Common myeloid progenitor, CD34-positive (primary cell): ENCODE measurements at regions of chr6 and their contacts with region 1.

Region 1: GRCh38 chr6:33744001-33744848 is 2.5 kb downstream of the IP6K3 start:
- DNase-seq: peak; percentile 72 to 88 (median 84)
- H3K4me3 ChIP-seq: no peak overlapping the region
- H3K27ac ChIP-seq: no peak overlapping the region
- H3K4me1 ChIP-seq: peaks cover 0 to 5% (median 0%) of the 10 kb centered on the region in 4 experiments
- H3K27me3 ChIP-seq: peaks cover 0 to 22% (median 0%) of the 10 kb centered on the region in 5 experiments

Region 2: GRCh38 chr6:33711140-33712129 is 32.8 kb before region 1 on chr6 and contains the start of gene UQCC2:
- CTCF ChIA-PET with region 1: interaction called, 18 read pairs
- POLR2A ChIA-PET with region 1: no interaction called
- DNase-seq: peak; percentile 96 to 98 (median 96)
- H3K4me3 ChIP-seq: peak within 1 kb of the TSS; percentile 60 to 97 (median 83)
- H3K27ac ChIP-seq: peak within 1 kb of the TSS; percentile 89 to 93
- H3K4me1 ChIP-seq: peaks cover 9 to 44% (median 30%) of the 10 kb centered on the region in 4 experiments
- H3K27me3 ChIP-seq: no peaks in the 10 kb centered on the region

Region 3: GRCh38 chr6:33727932-33728331 is 16.3 kb before region 1 on chr6:
- CTCF ChIA-PET with region 1: interaction called, 12 read pairs
- POLR2A ChIA-PET with region 1: no interaction called
- DNase-seq: no peak
- H3K4me3 ChIP-seq: no peak overlapping the region
- H3K27ac ChIP-seq: no peak overlapping the region
- H3K4me1 ChIP-seq: no peaks in the 10 kb centered on the region
- H3K27me3 ChIP-seq: peaks cover 0 to 10% (median 4%) of the 10 kb centered on the region in 5 experiments

Region 4: GRCh38 chr6:33761922-33762629 is 17.9 kb after region 1 on chr6:
- CTCF ChIA-PET with region 1: interaction called, 44 read pairs
- POLR2A ChIA-PET with region 1: interaction called, 3 read pairs
- DNase-seq: peak; percentile 60 to 73 (median 64)
- H3K4me3 ChIP-seq: no peak overlapping the region
- H3K27ac ChIP-seq: no peak overlapping the region
- H3K4me1 ChIP-seq: peaks cover 0 to 21% (median 12%) of the 10 kb centered on the region in 4 experiments
- H3K27me3 ChIP-seq: peaks cover 0 to 2% (median 0%) of the 10 kb centered on the region in 5 experiments